ENCODE measurements at regions of chr9 and their contacts with region 1.

Region 1: DNA sequence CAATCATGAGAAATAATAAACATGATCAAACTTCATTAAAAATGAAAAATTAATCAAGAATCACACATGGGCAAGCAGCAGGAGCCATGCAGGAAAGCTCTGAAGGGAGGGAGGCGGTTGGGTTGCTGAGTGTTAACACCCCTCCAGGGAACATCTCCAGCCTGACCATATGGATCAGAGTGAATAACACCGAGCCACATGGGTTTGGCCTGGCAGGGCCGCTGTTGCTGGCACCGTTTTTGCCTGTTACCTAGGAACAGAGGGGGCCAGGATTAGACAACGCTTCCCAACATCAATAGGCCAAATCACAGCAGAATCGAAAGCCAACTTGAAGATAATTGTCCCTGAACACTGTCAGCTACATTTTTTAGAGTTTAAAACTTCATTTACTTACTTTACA is 160.2 kb downstream of the DENND1A start:
- DNase-seq: no peak
- H3K4me3 ChIP-seq: no peak overlapping the region
- H3K27ac ChIP-seq: no peak overlapping the region
- H3K4me1 ChIP-seq: peaks cover 8% of the 10 kb centered on the region
- CTCF ChIP-seq: no peak

Region 2: DNA sequence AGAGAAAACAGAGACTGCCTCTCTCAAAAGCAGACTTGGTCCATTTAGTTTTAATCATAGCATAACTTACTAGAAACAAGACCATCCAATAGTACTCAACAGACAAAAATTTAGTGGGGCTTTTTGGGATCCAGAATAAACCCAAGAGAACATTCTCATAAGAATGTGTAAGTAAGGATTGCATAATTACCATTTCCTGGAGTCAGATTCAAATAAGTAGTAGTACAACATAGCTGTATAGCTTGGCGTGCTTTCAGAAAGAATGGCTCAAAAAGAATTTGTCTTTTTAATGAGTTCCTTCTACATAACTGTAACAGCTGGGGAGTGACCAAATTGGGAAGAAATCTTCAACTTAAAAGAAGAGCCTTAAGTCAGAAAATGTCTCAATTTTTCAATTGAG is 14.8 kb after region 1 on chr9:
- CTCF ChIA-PET with region 1: no interaction called
- POLR2A ChIA-PET with region 1: interaction called, 12 read pairs
- intact Hi-C with region 1: no loop called
- DNase-seq: no peak
- H3K4me3 ChIP-seq: no peak overlapping the region
- H3K27ac ChIP-seq: no peak overlapping the region
- H3K4me1 ChIP-seq: no peaks in the 10 kb centered on the region
- CTCF ChIP-seq: no peak

Measured in OCI-LY7 (cell line).